GM18951 (cell line): ENCODE measurements at regions of chr17 and their contacts with region 1.

Region 1: DNA sequence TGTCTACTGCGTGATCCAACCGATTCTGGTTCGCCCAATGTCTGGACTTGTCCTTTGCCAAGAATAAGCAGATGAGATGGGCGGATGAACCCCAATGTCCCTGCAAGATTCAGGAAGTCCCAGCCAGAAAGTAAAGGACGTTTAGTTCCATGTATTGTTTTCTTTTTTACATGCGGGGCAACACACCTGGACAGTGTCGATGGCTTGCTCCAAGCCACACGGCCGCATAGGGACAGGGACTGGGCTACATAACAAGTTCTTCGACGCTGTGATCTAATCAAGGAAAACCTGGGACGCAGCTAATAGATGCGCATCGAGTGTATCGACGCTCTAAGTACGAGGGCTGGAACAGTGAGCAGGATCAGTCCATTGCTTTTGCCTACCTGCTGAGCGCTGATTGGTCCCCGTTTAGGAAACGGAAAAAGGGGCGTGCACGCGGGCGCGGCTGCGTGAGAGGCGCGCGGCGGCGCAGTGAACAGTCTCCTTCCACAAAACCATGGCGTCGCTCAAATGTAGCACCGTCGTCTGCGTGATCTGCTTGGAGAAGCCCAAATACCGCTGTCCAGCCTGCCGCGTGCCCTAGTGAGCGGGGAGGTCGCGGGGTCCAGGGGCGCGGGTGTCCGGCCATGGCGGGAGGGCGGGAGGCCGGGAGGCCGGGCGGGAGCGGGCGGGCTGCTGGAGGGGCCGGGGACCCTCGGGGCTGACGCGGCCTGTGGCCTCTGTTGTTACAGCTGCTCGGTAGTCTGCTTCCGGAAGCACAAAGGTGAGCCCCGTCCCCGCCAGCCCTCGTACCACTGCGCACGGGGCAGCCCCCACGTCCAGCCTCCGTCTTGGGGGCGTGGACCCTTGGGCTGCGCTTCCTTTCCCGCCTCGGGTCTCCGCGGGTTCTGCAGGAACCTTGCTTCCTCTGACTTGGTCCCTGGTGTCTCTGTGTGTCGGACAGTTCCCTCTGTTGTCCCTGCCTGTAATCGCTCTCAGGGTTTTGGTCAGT is at the start of gene ZNHIT3:
- POLR2A ChIP-seq: peak; percentile 86

Region 2: DNA sequence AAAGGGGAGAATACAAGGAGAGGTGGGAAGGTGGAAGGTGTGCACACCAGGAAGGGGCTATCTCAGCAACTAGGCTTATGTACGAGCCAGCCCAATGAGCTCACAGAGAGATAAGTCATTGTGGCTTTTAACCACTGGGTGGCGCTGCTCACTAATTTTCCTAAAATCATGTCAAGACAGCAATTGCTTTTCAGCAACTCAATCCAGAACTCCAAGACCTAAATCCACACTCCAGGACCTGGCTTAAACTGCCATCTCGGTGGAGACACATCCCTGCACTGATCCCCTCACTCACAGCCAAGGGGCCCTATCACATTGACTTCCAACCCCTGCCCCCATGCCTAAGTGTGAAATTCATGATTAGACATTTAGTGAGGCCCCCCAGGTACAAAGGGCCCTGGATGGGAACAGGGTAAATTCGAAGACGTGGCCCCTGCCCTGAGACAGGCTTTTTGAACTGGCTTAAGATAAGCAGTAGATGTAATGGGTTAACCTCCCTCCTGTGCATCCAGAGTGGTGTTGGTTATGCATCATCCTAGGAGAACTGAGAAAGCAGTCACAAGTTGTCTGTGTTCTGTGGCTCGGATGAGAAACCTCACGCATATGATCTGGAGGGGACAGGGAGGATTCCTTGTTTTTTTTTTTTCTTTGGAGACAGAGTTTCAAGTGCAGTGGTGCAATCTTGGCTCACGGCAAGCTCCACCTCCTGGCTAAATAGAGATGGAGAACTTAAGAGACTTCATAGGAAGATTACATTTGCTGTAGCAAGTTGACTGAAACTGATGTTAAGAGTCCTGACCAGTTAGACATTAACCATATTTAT is 516.7 kb before region 1 on chr17:
- in situ Hi-C with region 1: loop called (anchors 25 kb)
- POLR2A ChIP-seq: no peak

Region 3: DNA sequence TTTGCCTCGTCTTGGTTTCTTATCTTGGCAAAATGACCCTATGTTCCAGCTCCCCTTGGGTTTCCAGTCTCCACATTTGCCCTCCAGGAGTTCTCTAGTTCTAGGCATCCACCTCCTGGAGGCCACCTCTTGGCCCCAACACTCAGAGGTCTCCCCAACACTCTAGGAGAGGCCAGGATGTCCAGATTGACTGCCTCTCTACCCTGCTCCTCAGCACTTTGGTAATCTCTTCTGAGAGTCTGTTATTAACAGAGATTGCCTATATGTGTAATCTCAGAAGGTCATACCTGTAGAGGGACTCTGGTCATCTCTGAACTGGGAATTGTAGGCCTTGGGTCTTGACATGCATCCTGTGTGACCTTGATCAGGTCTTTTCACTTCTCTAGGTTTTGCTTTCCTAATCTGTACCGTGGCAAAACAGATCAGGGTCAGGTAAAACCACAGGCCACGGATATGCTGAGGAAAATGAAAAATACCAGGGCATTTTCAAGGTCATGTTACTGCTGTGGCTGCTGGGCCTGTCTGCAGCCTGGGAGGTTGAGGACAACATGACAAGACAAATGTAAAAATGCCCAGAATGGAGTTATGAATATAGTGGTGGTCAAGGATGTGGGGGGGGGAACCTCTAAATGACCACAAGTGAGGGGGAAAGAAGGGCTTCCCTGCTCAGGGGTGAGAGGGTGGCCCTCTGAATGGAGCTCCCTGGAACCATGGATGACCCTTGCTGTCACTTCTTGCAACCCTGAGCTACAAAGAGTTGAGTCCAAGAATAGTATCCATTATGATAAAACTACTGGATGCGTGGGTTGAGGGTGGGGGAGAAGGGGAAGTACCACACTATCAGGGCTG is 280.6 kb before region 1 on chr17:
- in situ Hi-C with region 1: loop called (anchors 25 kb)
- POLR2A ChIP-seq: no peak